Activated T-helper 1 cell treated with anti-CD3 and anti-CD28 coated beads, Interleukin-12 subunit alpha, Interleukin-12 subunit beta, Interleukin-2, Interleukin-4 antibody, amounts not matched to agents 30 ng/mL and 10 ng/mL and 1 ng/mL, durations not matched to agents 14 hours and 24 hours and 36 hours (primary cell): ENCODE measurements at regions of chr12 and their contacts with region 1.

Region 1: GRCh38 chr12:47032644-47033043 is 46.8 kb upstream of the PCED1B start:
- DNase-seq: no peak
- H3K4me3 Mint-ChIP-seq: no peak overlapping the region
- H3K27ac Mint-ChIP-seq: no peak overlapping the region
- H3K4me1 Mint-ChIP-seq: peaks cover 11% of the 10 kb centered on the region
- H3K27me3 Mint-ChIP-seq: peaks cover 6% of the 10 kb centered on the region

Region 2: GRCh38 chr12:47079468-47079980 is 46.9 kb after region 1 on chr12 and contains the starts of genes AMIGO2 and PCED1B:
- intact Hi-C with region 1: loop called (anchors 2 kb)
- DNase-seq: peak; percentile 63
- H3K4me3 Mint-ChIP-seq: peak within 1 kb of the TSS; percentile 97
- H3K27ac Mint-ChIP-seq: peak within 1 kb of the TSS; percentile 97
- H3K4me1 Mint-ChIP-seq: peaks cover 81% of the 10 kb centered on the region
- H3K27me3 Mint-ChIP-seq: no peaks in the 10 kb centered on the region
- total RNA-seq, gene AMIGO2: 11.6 and 12.5 TPM in 2 replicates
- total RNA-seq, gene PCED1B: 50.8 and 55.5 TPM in 2 replicates

Region 3: GRCh38 chr12:47190271-47190750 is 157.7 kb after region 1 on chr12:
- intact Hi-C with region 1: loop called (anchors 2 kb)
- DNase-seq: no peak
- H3K4me3 Mint-ChIP-seq: peak overlapping the region; percentile 24
- H3K27ac Mint-ChIP-seq: peak overlapping the region; percentile 71
- H3K4me1 Mint-ChIP-seq: peaks cover 69% of the 10 kb centered on the region
- H3K27me3 Mint-ChIP-seq: no peaks in the 10 kb centered on the region

Region 4: GRCh38 chr12:47356129-47356700 is 323.6 kb after region 1 on chr12:
- intact Hi-C with region 1: loop called (anchors 5 kb)
- DNase-seq: no peak
- H3K4me3 Mint-ChIP-seq: peak overlapping the region; percentile 60
- H3K27ac Mint-ChIP-seq: peak overlapping the region; percentile 97
- H3K4me1 Mint-ChIP-seq: peaks cover 73% of the 10 kb centered on the region
- H3K27me3 Mint-ChIP-seq: no peaks in the 10 kb centered on the region

Region 5: GRCh38 chr12:47636908-47637780 is 604.5 kb after region 1 on chr12:
- intact Hi-C with region 1: loop called (anchors 1 kb)
- DNase-seq: peak; percentile 3
- H3K4me3 Mint-ChIP-seq: no peak overlapping the region
- H3K27ac Mint-ChIP-seq: no peak overlapping the region
- H3K4me1 Mint-ChIP-seq: peaks cover 8% of the 10 kb centered on the region
- H3K27me3 Mint-ChIP-seq: no peaks in the 10 kb centered on the region

Region 6: GRCh38 chr12:47758834-47759690 is 726.4 kb after region 1 on chr12 and contains the start of gene RAPGEF3:
- intact Hi-C with region 1: loop called (anchors 10 kb)
- DNase-seq: peak; percentile 58
- H3K4me3 Mint-ChIP-seq: peak within 1 kb of the TSS; percentile 75
- H3K27ac Mint-ChIP-seq: no peak within 1 kb of the TSS
- H3K4me1 Mint-ChIP-seq: peaks cover 56% of the 10 kb centered on the region
- H3K27me3 Mint-ChIP-seq: peaks cover 4% of the 10 kb centered on the region
- total RNA-seq, gene RAPGEF3: 4.7 and 6.5 TPM in 2 replicates